Esophagus squamous epithelium (tissue), 5 donors: ENCODE measurements at regions of chr15 and their contacts with region 1.

Region 1: GRCh38 chr15:45714590-45715488 is 80.0 kb downstream of the SQOR start:
- DNase-seq: no peak
- H3K4me3 ChIP-seq: no peak overlapping the region
- H3K27ac ChIP-seq: no peak overlapping the region
- H3K4me1 ChIP-seq: no peaks in the 10 kb centered on the region
- H3K27me3 ChIP-seq: peaks cover 0 to 13% (median 0%) of the 10 kb centered on the region in 4 donors
- CTCF ChIP-seq: peak; percentile 39 to 79 (median 68)
- POLR2A ChIP-seq: no peak

Region 2: DNA sequence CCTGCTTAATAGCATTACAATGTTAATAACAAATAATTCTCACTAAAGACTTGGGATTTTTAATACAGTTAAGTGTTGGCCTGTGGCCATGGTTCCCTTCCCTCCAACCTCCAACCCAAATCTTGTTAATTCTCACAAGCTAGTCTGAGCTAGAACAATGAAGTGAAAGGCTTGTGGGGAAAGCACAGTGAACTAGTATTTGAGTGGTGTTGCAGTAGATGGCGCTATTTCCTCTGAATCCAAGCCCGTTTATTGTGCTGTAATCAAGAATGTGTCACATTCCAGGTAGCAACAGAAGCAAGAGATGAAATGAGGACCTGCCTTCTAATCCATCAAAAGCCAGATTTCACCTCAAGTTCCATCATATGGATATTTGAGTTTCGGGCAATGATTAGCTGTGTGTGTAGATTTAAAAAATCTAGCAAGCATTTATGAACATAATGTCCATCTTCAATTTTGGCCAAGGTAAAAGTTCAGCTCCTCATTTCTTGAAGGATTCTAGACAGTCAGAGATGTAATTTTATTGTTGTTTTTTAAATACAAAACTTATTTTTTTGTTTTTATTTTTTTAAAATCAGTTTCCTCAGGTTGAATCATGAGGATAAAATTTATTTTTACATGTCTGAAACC is 80.7 kb after region 1 on chr15:
- intact Hi-C with region 1: loop called (anchors 10 kb)
- DNase-seq: no peak
- H3K4me3 ChIP-seq: no peak overlapping the region
- H3K27ac ChIP-seq: no peak overlapping the region
- H3K4me1 ChIP-seq: no peaks in the 10 kb centered on the region
- H3K27me3 ChIP-seq: peaks cover 0 to 30% (median 0%) of the 10 kb centered on the region in 4 donors
- CTCF ChIP-seq: peak in 5 of 6 experiments; percentile 39 to 70 (median 46)
- POLR2A ChIP-seq: no peak